T-cell (primary cell): ENCODE measurements at regions of chr14 and their contacts with region 1.

Region 1: GRCh38 chr14:98501836-98502235 is 770.2 kb downstream of the BCL11B start:
- DNase-seq: no peak
- ATAC-seq: no peak
- H3K4me3 ChIP-seq: no peak overlapping the region
- H3K4me3 Mint-ChIP-seq: no peak overlapping the region
- H3K27ac ChIP-seq: no peak overlapping the region
- H3K27ac Mint-ChIP-seq: no peak overlapping the region
- H3K4me1 ChIP-seq: no peaks in the 10 kb centered on the region
- H3K4me1 Mint-ChIP-seq: peaks cover 6 to 24% (median 13%) of the 10 kb centered on the region in 3 donors
- H3K27me3 ChIP-seq: no peaks in the 10 kb centered on the region
- H3K27me3 Mint-ChIP-seq: no peaks in the 10 kb centered on the region

Region 2: DNA sequence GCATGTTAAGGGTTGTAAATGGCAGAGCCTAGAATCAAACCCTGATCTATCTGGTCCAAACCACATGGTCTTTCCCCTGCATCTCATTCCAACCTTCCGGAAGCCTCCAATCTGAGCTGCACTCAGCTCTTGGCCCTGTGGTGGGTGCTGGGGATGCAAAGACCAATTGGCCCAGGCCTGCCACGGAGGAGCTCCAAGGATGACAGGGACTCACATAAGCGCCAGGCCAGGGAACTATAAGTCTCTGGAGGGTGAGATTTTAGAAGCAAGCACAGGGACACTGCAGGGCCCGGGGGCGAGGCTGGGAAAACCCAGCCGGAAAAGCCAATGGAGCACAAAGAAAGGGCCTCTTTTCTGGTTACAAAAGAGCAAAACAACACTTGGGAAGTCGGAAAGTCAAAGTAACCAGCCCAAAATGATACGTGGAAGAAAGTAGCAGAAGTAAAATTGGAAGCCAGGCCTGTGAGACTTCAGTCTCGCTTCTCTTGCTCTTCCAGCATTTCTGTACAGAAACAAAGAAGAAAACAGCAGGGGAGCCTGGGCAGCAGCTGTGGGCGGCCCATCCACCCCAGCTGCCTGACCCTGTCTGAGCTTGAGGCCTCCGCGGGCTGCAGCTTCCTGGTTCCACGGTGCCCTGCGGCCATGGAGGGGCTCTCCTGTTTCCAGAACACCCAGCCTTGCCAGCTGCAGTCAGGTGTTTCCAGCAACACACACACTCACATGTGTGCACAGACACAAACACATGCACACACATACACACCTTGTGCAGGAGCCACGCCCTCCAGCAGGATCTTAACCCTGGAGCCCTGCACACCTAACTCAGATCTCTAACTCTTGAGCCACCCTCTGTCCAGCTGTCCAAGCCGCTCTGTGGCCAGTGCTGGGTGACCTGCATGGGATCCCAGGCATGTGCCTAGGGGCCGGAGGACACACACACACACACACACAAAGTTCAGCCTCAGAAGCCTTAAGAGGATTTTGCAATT is 592.0 kb after region 1 on chr14:
- CTCF ChIA-PET with region 1: no interaction called
- POLR2A ChIA-PET with region 1: interaction called in 1 of 2 experiments, 15 read pairs
- DNase-seq: no peak
- ATAC-seq: no peak
- H3K4me3 ChIP-seq: no peak overlapping the region
- H3K4me3 Mint-ChIP-seq: no peak overlapping the region
- H3K27ac ChIP-seq: no peak overlapping the region
- H3K27ac Mint-ChIP-seq: no peak overlapping the region
- H3K4me1 ChIP-seq: no peaks in the 10 kb centered on the region
- H3K4me1 Mint-ChIP-seq: peaks cover 0 to 3% (median 0%) of the 10 kb centered on the region in 3 donors
- H3K27me3 ChIP-seq: no peaks in the 10 kb centered on the region
- H3K27me3 Mint-ChIP-seq: no peaks in the 10 kb centered on the region